ENCODE measurements at regions of chr6 and their contacts with region 1.

Region 1: DNA sequence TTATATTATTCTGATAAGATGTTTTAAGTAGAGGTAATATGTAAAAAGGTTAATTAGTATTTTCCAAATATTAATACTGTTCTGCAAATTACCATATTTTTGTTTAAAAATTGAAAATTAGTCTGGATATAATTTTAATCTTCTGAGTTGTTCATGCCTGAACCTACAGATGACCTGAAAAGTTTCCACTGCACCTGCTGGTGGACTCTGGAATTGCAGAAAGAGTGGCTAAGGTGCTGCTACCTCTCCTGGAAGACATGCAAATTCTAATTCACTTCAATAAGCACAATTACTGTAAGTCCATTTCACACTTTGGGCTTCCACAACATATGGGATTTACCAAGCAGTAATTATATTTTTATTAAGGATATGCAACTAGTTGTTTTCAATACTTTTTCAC is 77.7 kb upstream of the OLIG3 start:
- DNase-seq: peak; percentile 33
- CTCF ChIP-seq: peak; percentile 52

Region 2: DNA sequence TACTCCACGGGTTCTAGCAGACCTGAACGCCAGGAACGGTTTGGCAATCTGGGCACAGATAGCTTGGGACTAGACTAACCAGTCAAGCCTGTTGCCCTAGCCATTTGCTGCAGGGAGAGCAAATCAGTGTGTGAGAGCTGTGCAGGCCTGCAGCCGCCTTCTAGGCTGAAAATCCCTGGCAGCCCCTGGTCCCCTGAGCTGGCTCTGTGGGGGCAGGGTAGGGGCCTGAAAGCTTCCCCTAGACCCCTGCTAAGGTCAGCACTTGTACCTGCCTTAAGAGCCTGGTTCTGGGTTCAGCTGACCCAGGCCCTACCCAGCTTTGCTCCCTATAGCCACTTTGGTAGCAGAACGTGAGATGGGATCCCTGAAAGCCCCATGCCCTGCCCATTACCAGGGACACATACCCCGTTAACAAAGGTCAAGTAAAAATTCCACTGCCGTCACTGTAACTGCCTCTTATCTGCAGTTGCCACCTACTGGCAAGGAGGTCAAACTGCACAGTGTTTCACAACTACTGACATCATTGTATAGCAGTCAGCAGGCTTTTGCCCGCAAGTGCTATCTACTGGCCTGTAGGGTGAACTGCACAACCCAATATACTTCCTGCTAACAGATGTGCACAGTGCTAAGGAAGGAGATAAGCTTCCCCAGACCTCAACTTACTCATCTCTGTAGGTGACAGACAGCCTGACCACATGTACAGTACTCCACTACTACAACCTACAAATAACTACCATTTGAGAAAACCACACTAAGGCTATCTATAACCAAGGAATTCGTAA is 17.4 kb after region 1 on chr6:
- CTCF ChIA-PET with region 1: interaction called, 14 read pairs
- POLR2A ChIA-PET with region 1: no interaction called
- DNase-seq: peak; percentile 50
- CTCF ChIP-seq: peak; percentile 49